ENCODE measurements at regions of chr1 and their contacts with region 1.

Region 1: DNA sequence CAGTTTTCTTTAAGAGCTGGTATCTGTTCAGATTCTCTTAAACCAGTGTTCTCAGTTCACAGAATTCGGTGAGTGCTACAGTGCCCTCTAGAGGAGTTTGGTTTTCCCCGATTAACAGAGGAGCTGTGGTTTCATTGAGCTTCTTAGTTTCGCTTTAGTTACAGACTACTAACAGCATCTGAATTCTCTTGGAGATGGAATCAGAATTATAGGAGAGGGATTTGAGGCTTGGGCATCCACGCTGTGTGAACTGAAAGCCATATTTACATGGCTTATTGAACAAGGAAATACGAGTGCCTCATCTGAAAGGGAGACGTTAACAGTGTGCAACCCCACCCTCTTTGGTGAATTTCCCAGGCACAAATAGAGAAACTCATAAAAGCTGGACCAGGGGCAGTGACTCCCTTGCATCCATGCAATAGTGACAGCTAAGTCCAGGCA is 202.0 kb downstream of the USH2A start:
- DNase-seq: peak; percentile 71
- H3K4me3 Mint-ChIP-seq: peak overlapping the region; percentile 78
- H3K27ac Mint-ChIP-seq: peak overlapping the region; percentile 85
- H3K4me1 Mint-ChIP-seq: peaks cover 32% of the 10 kb centered on the region
- H3K27me3 Mint-ChIP-seq: no peaks in the 10 kb centered on the region
- CTCF ChIP-seq: peak; percentile 67

Region 2: GRCh38 chr1:215360758-215361157 is 860.5 kb before region 1 on chr1:
- CTCF ChIA-PET with region 1: no interaction called
- intact Hi-C with region 1: no loop called
- DNase-seq: no peak
- H3K4me3 Mint-ChIP-seq: no peak overlapping the region
- H3K27ac Mint-ChIP-seq: no peak overlapping the region
- H3K4me1 Mint-ChIP-seq: no peaks in the 10 kb centered on the region
- H3K27me3 Mint-ChIP-seq: no peaks in the 10 kb centered on the region
- CTCF ChIP-seq: no peak

Region 3: GRCh38 chr1:215824245-215824644 is 397.0 kb before region 1 on chr1:
- CTCF ChIA-PET with region 1: no interaction called
- intact Hi-C with region 1: loop called (anchors 5 kb)
- DNase-seq: peak; percentile 21
- H3K4me3 Mint-ChIP-seq: no peak overlapping the region
- H3K27ac Mint-ChIP-seq: no peak overlapping the region
- H3K4me1 Mint-ChIP-seq: no peaks in the 10 kb centered on the region
- H3K27me3 Mint-ChIP-seq: no peaks in the 10 kb centered on the region
- CTCF ChIP-seq: peak; percentile 57

Region 4: DNA sequence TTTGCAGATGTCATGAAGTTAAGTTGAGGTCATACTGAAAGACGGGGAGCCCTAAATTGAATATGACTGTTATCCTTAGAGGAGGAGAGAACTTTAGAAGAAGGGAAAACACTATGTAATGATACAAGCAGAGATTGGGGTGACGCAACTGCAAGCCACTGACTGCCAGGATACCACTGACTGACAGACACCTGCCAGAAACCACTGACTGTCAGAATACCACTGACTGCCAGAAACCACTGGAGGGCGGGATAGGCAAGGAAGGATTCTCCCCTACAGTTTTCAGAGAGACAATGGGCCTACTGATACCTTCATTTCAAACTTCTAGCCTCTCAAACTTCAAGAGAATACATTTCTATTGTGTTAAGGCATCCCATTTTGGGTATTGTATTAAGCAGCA is 186.8 kb before region 1 on chr1:
- CTCF ChIA-PET with region 1: no interaction called
- intact Hi-C with region 1: loop called (anchors 5 kb)
- DNase-seq: peak; percentile 41
- H3K4me3 Mint-ChIP-seq: no peak overlapping the region
- H3K27ac Mint-ChIP-seq: no peak overlapping the region
- H3K4me1 Mint-ChIP-seq: no peaks in the 10 kb centered on the region
- H3K27me3 Mint-ChIP-seq: no peaks in the 10 kb centered on the region
- CTCF ChIP-seq: no peak

Region 5: DNA sequence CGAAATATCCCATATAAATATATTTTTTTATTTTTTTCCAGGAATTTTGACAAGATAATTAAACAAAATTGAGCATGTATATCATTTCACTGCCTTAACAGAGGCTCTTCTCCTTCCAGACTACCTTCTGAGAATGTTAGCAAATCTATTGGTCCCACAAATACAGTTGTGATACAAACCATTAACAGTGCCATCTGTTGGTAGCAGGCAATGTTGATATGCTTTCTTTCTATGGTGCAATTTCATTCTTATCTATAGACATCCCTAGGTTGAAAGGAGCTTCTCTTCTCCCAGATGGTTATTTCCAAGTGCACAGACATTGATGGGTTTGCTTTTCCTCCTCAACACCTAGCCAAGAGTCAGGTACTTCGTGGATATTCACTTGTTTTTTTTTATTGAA is 101.7 kb before region 1 on chr1:
- CTCF ChIA-PET with region 1: interaction called, 14 read pairs
- intact Hi-C with region 1: no loop called
- DNase-seq: peak; percentile 12
- H3K4me3 Mint-ChIP-seq: no peak overlapping the region
- H3K27ac Mint-ChIP-seq: no peak overlapping the region
- H3K4me1 Mint-ChIP-seq: no peaks in the 10 kb centered on the region
- H3K27me3 Mint-ChIP-seq: no peaks in the 10 kb centered on the region
- CTCF ChIP-seq: no peak

Region 6: GRCh38 chr1:216566641-216567205 is 345.4 kb after region 1 on chr1:
- CTCF ChIA-PET with region 1: interaction called, 8 read pairs
- intact Hi-C with region 1: loop called (anchors 5 kb)
- DNase-seq: peak; percentile 23
- H3K4me3 Mint-ChIP-seq: no peak overlapping the region
- H3K27ac Mint-ChIP-seq: no peak overlapping the region
- H3K4me1 Mint-ChIP-seq: no peaks in the 10 kb centered on the region
- H3K27me3 Mint-ChIP-seq: peaks cover 22% of the 10 kb centered on the region
- CTCF ChIP-seq: no peak

Region 7: DNA sequence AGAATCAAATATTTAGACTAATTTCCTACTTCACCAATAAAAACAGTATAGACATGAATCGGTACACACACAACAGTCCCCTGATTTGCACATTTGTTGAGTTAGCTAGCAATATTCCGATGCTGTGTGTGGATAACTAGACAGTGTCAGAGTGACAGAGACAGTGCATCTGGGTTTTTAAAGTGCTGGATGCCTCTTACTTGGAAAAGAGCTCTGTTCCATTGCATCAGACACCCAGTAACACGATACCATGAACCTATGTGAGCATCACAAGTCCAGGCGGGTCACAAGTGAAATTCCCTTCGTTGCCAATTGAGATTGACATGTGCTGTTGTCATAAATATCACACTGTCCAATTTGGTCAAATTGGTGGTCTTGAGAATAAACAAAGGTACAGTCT is 584.0 kb after region 1 on chr1:
- CTCF ChIA-PET with region 1: no interaction called
- intact Hi-C with region 1: no loop called
- DNase-seq: no peak
- H3K4me3 Mint-ChIP-seq: no peak overlapping the region
- H3K27ac Mint-ChIP-seq: no peak overlapping the region
- H3K4me1 Mint-ChIP-seq: no peaks in the 10 kb centered on the region
- H3K27me3 Mint-ChIP-seq: no peaks in the 10 kb centered on the region
- CTCF ChIP-seq: no peak

Measured in Calu3 (cell line).